ENCODE measurements at regions of chr22 and their contacts with region 1.

Region 1: GRCh38 chr22:19756288-19757128 is 4.1 kb upstream of the TBX1 start:
- DNase-seq: peak; percentile 18

Region 2: DNA sequence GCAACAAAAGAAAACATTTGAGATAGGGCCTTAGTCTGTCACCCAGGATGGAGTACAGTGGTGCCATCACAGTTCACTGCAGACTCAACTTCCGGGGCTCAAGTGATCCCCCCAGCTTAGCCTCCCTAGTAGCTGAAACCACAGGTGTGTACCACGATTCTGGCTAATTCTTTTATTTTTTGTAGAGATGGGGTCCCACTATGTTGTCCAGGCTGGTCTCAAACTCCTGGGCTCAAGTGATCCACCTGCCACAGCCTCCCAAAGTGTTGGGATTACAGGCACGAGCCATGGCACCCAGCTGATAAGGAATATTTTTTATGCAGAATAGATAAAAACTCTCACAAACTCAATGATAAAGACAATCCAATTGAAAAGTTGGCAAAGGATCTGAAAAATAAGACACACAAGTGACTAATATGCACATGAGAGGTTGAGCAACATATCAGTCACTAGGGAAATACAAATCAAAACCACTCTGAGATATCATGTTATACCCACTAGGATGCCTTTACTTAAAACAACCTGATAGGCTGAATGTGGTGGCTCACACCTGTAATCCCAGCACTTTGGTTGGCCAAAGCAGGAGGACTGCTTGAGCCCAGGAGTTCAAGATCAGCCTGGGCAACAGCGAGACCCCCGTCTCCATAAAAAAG is 431.1 kb before region 1 on chr22:
- in situ Hi-C with region 1: no loop called
- DNase-seq: no peak

Region 3: DNA sequence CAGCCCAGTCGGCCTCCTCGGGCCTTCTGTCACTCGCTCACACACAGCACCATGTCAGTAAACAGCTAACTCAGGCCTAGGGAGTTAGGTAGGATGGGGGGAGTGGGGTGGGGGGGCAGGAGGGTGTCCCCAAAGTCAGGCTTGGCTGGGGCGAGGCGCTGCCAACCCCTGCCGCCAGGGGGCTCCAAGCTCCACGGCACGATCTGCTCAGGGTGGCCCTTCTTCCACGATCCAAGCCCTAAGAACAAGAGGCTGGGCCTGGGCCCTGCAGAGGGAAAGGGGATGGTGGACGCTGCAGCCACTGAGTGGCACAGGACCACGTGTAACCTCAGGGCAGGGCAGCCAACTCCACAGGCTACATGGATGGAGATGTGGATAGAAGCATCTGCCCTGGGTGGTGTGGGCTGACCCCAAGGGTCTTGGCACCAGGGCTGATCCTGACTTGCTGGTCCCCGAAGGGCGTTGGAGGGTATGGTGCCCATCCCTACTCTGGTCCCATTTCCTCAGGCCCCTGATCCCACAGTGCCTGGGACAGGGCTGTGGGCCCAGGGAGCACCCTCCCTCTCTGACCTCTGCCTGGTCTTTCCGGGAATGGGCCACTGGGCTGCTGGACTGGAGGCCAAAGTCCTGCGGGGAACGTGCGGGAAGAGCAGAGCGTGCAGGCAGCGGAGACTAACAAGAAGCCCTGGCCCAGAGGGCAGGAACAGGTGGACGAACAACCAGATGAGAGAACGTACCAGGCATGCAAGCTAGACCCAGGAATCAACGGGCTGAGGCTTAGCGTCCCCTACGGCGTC is 214.2 kb after region 1 on chr22:
- in situ Hi-C with region 1: loop called (anchors 25 kb)
- DNase-seq: peak; percentile 73